ENCODE measurements at regions of chr1 and their contacts with region 1.

Region 1: DNA sequence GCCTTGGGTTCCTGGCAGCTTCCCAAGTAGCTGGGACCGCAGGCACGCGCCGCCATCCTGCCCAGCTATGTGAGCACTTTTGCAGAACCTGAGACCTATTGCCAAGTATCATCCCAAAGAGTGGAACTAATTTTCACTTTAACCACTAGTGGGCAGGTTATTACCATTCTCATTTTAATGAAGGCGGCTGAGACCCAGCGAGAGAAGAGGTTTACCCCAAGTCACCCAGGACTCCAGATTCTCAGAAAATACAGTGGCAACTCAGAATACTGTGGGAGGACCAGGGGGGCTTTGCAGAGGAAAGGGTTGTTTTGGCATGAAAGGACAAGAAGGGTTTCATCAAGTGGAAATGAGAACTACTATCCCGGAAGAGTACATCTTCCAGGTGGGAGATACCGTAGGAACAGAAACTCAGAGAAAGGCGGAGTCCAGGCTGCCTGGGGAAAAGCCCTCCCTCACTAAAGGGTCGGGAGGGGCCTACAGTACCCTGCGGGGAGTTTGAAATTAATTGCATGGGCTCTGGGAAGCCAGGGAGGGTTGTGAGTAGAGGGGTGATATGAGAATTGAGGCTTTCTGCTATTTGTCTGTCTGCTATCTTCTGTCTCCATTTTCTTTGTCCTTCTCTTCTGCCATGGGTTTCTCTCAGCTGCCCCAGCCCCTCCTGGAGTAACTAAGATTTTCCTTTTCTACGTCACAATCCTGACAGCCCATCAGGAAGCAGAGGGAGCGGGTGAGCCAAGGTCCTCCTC is 7.2 kb upstream of the SEMA4A start:
- DNase-seq: peak in 20 of 42 donors; percentile 36 to 75 (median 54)

Region 2: DNA sequence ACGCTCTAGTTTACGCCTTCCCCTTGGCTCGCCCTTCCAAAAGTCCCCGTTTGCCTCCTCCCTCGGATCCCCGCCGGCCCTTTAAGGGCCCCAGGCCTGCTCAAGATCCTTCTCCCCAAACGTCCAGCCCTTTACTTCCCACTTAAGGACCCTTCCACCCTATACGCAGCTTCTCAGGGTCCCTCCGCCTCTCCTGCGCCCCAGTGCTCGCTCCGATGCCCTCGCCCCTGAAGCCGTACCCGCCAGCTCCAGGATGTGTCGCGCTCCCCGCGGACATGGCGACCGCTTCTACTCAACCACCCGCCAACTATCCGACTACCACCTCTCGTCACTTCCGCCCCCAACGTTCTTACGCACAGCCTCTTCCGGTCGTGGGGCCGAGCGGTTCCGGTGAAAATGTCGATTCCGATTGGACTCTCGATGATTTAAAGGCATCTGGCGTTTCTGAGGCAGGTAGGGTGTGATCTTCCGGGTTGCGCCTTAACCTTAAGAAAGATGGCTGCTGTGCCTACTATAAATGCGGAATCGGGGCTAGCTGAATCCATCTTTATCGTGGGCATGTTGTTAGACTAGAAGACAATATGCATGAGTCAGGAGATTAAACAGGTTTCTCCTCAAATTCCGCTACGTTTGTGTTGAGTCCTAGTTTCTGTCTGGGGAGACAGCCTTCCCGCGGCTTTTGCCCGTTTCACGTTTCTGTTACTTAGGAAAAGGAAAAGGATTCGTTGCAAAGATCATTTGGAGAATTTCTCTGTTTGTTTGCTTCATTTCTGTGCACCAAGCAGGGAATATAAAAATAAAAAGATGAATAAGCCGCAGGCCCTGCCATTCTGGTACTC is 211.9 kb before region 1 on chr1 and contains the start of gene KHDC4:
- intact Hi-C with region 1: no loop called
- DNase-seq: peak; percentile 92 to 99 (median 97)

Region 3: GRCh38 chr1:156221986-156222692 is 75.9 kb after region 1 on chr1:
- intact Hi-C with region 1: loop called (anchors 5 kb)
- DNase-seq: no peak

Measured in head of caudate nucleus (tissue), 42 donors.